Adrenal gland (tissue), 19 donors: ENCODE measurements at regions of chr12 and their contacts with region 1.

Region 1: DNA sequence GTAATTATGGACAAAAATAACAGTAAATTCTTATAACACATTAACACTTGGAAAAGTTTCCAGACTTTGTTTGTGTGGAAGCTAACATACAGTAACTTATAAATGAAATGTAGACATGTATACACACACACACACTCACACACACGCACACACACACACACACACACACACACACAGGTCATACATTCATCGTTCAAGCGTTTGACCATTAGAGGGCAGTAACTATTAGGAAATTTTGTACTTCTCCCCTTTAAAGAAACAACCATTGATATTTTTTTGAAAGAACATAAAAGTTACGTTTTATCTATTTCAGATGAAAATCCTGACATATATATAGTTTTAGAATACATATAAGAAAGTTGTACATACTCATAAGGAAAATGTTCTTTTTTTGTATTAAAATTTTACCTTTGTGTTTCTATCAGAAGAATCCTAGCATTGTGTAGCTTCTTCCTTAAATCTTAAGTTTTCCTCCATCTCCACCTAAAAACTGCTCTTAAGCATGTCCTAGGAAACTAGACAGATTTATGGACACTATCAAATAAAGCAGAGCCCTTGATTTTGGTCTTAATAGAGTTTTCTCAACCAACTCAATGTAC is 29.0 kb downstream of the PTPRQ start:
- DNase-seq: peak in 2 of 7 donors; percentile 3 to 22
- H3K4me3 ChIP-seq: no peak overlapping the region
- H3K27ac ChIP-seq: no peak overlapping the region
- H3K4me1 ChIP-seq: no peaks in the 10 kb centered on the region
- H3K27me3 ChIP-seq: no peaks in the 10 kb centered on the region
- CTCF ChIP-seq: peak; percentile 18 to 86 (median 51)
- POLR2A ChIP-seq: no peak

Region 2: DNA sequence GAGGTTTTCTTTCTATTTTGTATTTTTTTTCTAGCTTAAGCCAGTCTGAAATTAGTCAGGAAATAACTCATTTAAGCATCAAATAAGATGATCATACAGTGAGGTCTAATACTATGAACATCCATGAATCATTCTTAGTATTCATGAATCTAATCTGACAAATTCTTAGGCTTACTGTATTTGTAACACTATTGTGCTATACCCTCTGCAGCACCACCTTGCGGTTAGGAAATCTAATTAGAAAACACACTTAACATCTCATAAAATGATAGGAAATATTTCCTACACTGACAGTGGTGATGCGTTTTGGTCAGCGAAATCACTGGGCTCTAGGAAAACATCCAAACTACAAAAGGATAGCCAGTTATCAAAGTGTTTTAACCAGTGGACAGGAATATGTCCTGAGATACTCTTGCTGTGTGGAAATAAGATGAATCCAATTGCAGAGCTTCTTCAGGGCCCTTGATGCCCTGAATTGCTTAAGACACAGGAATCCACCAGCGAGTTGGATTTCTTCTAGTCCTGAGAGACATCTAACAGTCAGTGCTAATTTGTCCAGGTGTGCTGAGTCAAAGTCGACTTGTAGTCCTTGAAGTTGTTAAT is 125.1 kb after region 1 on chr12:
- intact Hi-C with region 1: loop called (anchors 10 kb)
- DNase-seq: peak in 5 of 7 donors; percentile 5 to 27 (median 19)
- H3K4me3 ChIP-seq: no peak overlapping the region
- H3K27ac ChIP-seq: no peak overlapping the region
- H3K4me1 ChIP-seq: no peaks in the 10 kb centered on the region
- H3K27me3 ChIP-seq: no peaks in the 10 kb centered on the region
- CTCF ChIP-seq: peak; percentile 7 to 39 (median 29)
- POLR2A ChIP-seq: no peak

Region 3: DNA sequence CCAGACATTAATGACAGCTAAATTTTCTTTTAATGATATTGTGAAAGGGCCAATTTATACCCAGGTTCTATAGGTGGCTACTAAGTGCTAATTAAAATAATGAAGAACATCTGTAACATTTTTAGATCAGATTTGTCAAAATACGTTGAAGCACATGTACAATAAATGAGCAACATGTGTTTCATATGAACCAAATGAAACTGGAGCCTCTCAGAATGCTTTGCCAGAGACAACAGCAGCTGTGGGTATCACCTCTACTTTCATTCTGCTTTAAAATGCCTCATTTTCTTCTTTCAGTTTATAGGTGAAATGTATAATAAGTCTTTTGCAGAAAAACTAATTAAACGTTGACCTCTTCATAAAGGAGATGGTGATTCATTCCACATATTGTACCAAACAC is 208.3 kb after region 1 on chr12:
- intact Hi-C with region 1: no loop called
- DNase-seq: no peak
- H3K4me3 ChIP-seq: no peak overlapping the region
- H3K27ac ChIP-seq: no peak overlapping the region
- H3K4me1 ChIP-seq: no peaks in the 10 kb centered on the region
- H3K27me3 ChIP-seq: no peaks in the 10 kb centered on the region
- CTCF ChIP-seq: no peak
- POLR2A ChIP-seq: no peak